ENCODE measurements at regions of chr17 and their contacts with region 1.

Region 1: GRCh38 chr17:67959288-67959900 is 36.9 kb downstream of the C17orf58 start:
- DNase-seq: peak in 2 of 3 donors; percentile 51 to 53
- ATAC-seq: peak; percentile 88
- H3K4me3 ChIP-seq: no peak overlapping the region
- H3K4me1 ChIP-seq: peaks cover 4% of the 10 kb centered on the region
- CTCF ChIP-seq: no peak

Region 2: DNA sequence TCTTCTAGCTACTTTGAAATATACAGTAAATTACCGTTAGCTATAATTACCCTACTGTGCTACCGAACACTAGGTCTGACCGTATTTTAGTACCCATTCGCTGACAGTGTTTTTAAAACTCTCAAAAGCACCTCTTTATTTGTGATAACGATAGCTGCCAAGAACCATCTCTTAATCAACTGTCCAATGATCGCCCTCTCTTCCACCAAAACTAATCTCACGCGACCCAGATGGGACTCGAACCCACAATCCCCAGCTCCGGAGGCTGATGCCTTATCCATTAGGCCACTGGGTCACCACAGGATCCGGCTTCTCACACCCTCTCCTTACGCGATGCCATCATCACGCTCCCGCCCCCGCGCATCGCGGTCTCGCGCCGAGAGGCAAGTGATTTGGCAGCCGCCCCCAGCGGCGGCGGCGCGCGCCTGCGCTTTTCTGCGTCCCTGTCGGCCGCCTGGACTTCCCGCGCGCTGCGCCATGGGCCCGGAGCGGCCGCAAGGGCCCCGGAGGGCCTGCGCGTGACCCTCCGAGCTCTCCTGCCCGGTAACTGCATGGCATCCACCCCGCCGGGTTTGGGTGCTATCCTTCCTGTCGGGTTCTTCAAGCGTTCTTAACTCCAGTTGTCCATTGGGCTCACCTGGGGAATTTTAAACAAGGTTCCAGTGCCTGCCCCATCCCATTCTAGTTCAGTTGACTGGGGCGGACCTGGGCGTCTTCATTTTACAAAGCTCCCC is 60.4 kb after region 1 on chr17:
- intact Hi-C with region 1: loop called in 1 of 2 experiments (anchors 10 kb)
- DNase-seq: peak; percentile 95 to 99 (median 96)
- ATAC-seq: peak; percentile 98
- H3K4me3 ChIP-seq: peak overlapping the region; percentile 33
- H3K4me1 ChIP-seq: peaks cover 6% of the 10 kb centered on the region
- CTCF ChIP-seq: peak; percentile 41